Dendritic cell treated with granulocyte-macrophage colony-stimulating factor and Interleukin-4, amounts not matched to agents 40 ng/mL and 50 ng/mL, for 4 days (primary cell): ENCODE measurements at regions of chr10 and their contacts with region 1.

Region 1: GRCh38 chr10:31490858-31491504 is 172.0 kb downstream of the ZEB1 start:
- H3K4me3 Mint-ChIP-seq: no peak overlapping the region
- H3K27ac Mint-ChIP-seq: no peak overlapping the region
- H3K4me1 Mint-ChIP-seq: no peaks in the 10 kb centered on the region
- H3K27me3 Mint-ChIP-seq: no peaks in the 10 kb centered on the region

Region 2: GRCh38 chr10:30751678-30752331 is 739.2 kb before region 1 on chr10:
- intact Hi-C with region 1: loop called (anchors 10 kb)
- H3K4me3 Mint-ChIP-seq: no peak overlapping the region
- H3K27ac Mint-ChIP-seq: no peak overlapping the region
- H3K4me1 Mint-ChIP-seq: no peaks in the 10 kb centered on the region
- H3K27me3 Mint-ChIP-seq: peaks cover 3% of the 10 kb centered on the region

Region 3: GRCh38 chr10:30783939-30784500 is 707.0 kb before region 1 on chr10:
- intact Hi-C with region 1: loop called (anchors 2 kb)
- H3K4me3 Mint-ChIP-seq: peak overlapping the region; percentile 76
- H3K27ac Mint-ChIP-seq: peak overlapping the region; percentile 30
- H3K4me1 Mint-ChIP-seq: peaks cover 22% of the 10 kb centered on the region
- H3K27me3 Mint-ChIP-seq: peaks cover 8% of the 10 kb centered on the region

Region 4: GRCh38 chr10:31083765-31084184 is 407.2 kb before region 1 on chr10:
- intact Hi-C with region 1: loop called (anchors 5 kb)
- H3K4me3 Mint-ChIP-seq: no peak overlapping the region
- H3K27ac Mint-ChIP-seq: no peak overlapping the region
- H3K4me1 Mint-ChIP-seq: no peaks in the 10 kb centered on the region
- H3K27me3 Mint-ChIP-seq: no peaks in the 10 kb centered on the region

Region 5: DNA sequence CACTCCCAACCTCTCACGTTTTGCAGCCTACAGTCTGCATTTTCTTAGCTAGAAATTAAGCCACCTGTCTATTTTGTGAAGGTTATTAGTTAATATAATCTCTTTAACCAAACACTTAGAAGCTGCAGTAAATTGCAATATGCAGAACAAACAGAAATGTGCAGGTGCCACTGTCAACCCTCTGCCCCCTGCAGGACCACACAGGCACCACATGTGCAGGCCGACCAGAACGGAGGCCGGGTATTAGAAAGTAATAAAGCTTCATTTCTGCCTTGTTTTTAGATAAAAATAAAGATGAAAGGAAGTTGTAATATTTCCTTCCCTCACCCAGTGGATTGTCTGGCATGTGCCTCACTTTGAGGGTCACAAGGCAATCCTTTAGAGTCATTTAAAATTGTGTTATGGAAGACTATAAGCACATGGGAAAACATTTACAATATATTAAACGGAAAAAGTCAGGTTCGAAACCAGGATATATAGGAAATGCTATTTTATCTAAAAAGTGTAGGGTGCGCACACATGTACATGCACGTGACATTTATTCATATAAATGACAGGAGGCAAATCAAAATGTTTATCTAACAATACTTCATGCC is 279.4 kb after region 1 on chr10:
- intact Hi-C with region 1: loop called (anchors 10 kb)
- H3K4me3 Mint-ChIP-seq: no peak overlapping the region
- H3K27ac Mint-ChIP-seq: no peak overlapping the region
- H3K4me1 Mint-ChIP-seq: no peaks in the 10 kb centered on the region
- H3K27me3 Mint-ChIP-seq: no peaks in the 10 kb centered on the region